Calu3 (cell line): ENCODE measurements at regions of chr17 and their contacts with region 1.

Region 1: GRCh38 chr17:4565209-4566141 is 5.1 kb upstream of the GGT6 start:
- DNase-seq: peak; percentile 42
- H3K4me3 Mint-ChIP-seq: no peak overlapping the region
- H3K27ac Mint-ChIP-seq: no peak overlapping the region
- H3K4me1 Mint-ChIP-seq: peaks cover 15% of the 10 kb centered on the region
- H3K27me3 Mint-ChIP-seq: peaks cover 15% of the 10 kb centered on the region
- CTCF ChIP-seq: peak; percentile 33

Region 2: GRCh38 chr17:4583782-4584100 is 18.3 kb after region 1 on chr17:
- CTCF ChIA-PET with region 1: no interaction called
- intact Hi-C with region 1: no loop called
- DNase-seq: no peak
- H3K4me3 Mint-ChIP-seq: peak overlapping the region; percentile 59
- H3K27ac Mint-ChIP-seq: no peak overlapping the region
- H3K4me1 Mint-ChIP-seq: peaks cover 8% of the 10 kb centered on the region
- H3K27me3 Mint-ChIP-seq: peaks cover 93% of the 10 kb centered on the region
- CTCF ChIP-seq: no peak

Region 3: DNA sequence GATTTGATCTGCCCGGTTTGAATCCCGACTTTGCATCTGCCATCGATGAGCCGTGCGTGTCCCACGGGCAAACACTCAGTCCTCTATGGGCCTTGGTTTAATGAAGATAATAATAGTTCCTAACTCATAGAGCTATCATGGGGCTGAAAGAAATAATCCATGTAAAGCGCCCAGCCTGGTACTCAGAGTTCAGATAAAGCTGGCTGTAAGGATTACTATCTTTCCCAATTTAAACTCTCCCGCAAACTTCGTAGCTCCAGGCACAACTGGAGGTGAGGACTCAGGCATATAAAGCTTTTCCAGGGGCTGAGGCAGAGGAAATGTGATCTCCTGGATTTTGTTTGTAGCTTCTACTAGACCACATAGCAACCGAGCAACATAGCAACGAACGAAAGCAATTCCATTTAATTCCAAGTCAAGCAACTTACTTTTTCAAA is 59.7 kb after region 1 on chr17:
- CTCF ChIA-PET with region 1: interaction called, 19 read pairs
- intact Hi-C with region 1: loop called (anchors 1 kb)
- DNase-seq: no peak
- H3K4me3 Mint-ChIP-seq: no peak overlapping the region
- H3K27ac Mint-ChIP-seq: no peak overlapping the region
- H3K4me1 Mint-ChIP-seq: no peaks in the 10 kb centered on the region
- H3K27me3 Mint-ChIP-seq: peaks cover 13% of the 10 kb centered on the region
- CTCF ChIP-seq: no peak

Region 4: DNA sequence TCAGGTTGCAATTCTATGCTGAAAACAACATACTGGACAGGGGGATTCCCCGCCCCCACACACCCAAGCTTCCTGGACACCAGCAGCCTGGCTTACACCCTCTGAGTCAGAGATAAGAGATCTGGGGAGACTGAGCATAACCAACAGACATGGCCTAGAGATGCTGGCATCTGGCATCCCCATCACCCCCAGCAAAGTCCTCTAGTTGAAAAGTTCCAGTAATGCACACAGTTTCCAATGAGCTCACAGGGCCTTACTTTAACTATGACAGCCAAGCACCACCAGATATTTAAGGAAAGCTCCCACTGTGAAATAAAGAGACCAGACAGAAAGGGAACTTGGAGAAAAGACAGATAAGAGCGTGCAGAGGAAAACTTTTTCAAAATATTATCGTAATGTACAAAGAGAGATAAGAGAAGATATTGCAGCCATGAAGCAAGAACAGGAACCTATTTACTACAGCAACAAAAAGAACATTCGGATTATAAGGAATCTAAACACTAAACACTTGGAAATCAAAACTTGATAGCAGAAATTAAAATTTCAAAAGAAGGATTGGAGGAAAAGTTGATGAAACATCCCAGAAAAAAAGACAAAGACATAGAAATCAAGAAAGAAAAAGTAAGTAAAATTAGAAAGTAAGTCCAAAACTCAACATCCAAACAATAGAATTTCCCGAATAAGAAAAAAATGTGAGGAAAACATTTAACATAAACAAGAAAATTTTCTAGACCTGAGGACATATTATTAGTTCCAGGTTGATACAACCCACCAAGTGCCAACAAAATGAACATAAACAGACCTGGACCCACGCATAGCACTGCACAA is 93.2 kb after region 1 on chr17:
- CTCF ChIA-PET with region 1: no interaction called
- intact Hi-C with region 1: no loop called
- DNase-seq: no peak
- H3K4me3 Mint-ChIP-seq: no peak overlapping the region
- H3K27ac Mint-ChIP-seq: no peak overlapping the region
- H3K4me1 Mint-ChIP-seq: peaks cover 7% of the 10 kb centered on the region
- H3K27me3 Mint-ChIP-seq: peaks cover 8% of the 10 kb centered on the region
- CTCF ChIP-seq: no peak

Region 5: GRCh38 chr17:4703330-4703691 is 137.8 kb after region 1 on chr17:
- CTCF ChIA-PET with region 1: no interaction called
- intact Hi-C with region 1: loop called (anchors 5 kb)
- DNase-seq: no peak
- H3K4me3 Mint-ChIP-seq: peak overlapping the region; percentile 93
- H3K27ac Mint-ChIP-seq: peak overlapping the region; percentile 61
- H3K4me1 Mint-ChIP-seq: peaks cover 32% of the 10 kb centered on the region
- H3K27me3 Mint-ChIP-seq: no peaks in the 10 kb centered on the region
- CTCF ChIP-seq: no peak